WTC11 (cell line): ENCODE measurements at regions of chr14 and their contacts with region 1.

Region 1: GRCh38 chr14:37230551-37231194 is 32.9 kb downstream of the MIPOL1 start:
- DNase-seq: no peak
- ATAC-seq: no peak
- H3K4me3 Mint-ChIP-seq: no peak overlapping the region
- H3K27ac Mint-ChIP-seq: no peak overlapping the region
- H3K4me1 Mint-ChIP-seq: no peaks in the 10 kb centered on the region
- H3K27me3 Mint-ChIP-seq: peaks cover 8% of the 10 kb centered on the region; the same call in 1 of the 2 replicates
- CTCF ChIP-seq: peak; percentile 72

Region 2: DNA sequence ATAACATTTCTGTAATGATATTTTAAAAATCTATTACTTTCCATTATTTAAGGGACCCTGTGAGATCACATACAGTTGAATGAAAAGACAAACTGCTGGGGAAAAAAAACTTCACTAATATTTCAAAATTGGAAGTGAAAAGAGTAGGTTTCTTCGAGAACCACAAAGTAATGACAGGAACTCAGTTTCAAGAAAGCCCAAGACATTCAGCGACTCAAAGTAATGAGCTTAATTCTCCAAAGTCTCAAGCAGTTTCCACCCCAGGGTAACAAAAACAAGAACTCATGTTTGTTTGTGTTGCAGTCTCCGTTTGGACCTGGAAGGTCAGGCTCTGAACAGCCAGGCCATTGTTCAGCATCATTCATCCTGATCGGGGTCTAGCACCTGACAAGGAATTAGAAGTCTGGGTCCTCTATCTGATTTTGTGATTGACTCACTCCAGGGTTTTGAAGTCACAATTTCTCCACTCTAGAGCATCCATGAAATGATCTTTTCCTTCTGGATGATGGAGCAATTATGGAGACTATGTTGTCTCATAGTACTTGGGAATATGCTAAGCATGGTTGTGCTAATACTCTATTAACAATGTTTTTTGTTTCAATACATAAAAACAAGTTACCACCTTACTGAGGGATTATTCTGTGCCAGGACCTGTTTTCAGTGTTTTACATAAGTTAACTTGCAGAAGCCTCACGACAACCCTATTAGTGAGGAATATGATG is 185.2 kb before region 1 on chr14:
- CTCF ChIA-PET with region 1: no interaction called
- POLR2A ChIA-PET with region 1: no interaction called
- DNase-seq: no peak
- ATAC-seq: no peak
- H3K4me3 Mint-ChIP-seq: no peak overlapping the region
- H3K27ac Mint-ChIP-seq: no peak overlapping the region
- H3K4me1 Mint-ChIP-seq: no peaks in the 10 kb centered on the region
- H3K27me3 Mint-ChIP-seq: no peaks in the 10 kb centered on the region
- CTCF ChIP-seq: no peak

Region 3: DNA sequence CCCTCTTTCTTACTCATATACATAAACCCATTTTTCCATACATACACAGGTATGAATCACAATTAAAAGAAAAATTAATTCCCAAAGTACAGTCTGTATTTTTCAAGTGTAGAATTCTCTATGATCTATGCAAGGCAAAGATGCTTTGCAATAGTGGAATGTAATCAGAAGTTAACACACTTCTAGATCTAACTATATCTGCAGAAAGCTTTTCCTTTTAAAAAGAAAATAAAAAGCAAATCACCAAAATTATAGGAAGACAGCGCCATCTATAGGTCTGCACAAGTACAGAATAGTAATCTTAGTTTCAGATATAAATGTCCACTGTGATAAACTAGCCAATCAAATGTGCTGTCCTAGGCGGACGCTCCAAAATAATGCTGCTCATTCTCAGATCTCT is 80.3 kb before region 1 on chr14:
- CTCF ChIA-PET with region 1: interaction called, 15 read pairs
- POLR2A ChIA-PET with region 1: no interaction called
- DNase-seq: no peak
- ATAC-seq: peak; percentile 68
- H3K4me3 Mint-ChIP-seq: no peak overlapping the region
- H3K27ac Mint-ChIP-seq: no peak overlapping the region
- H3K4me1 Mint-ChIP-seq: no peaks in the 10 kb centered on the region
- H3K27me3 Mint-ChIP-seq: no peaks in the 10 kb centered on the region
- CTCF ChIP-seq: peak; percentile 63

Region 4: DNA sequence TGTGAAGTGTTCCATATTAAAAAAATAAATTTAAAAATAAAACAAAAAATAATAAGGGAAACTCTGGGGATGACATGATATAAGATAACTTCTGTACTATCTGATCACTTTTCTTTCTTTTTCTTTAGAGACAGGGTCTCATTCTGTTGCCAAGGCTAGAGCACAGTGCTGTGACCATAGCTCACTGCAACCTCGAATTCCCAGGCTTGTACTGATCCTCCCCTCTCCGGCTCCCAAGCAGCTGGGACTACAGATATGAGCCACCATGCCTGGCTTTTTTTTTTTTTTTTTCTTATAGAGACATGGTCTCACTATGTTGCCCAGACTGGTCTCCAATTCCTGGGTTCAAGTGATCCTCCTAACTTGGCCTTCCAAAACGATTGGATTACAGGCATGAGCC is 43.4 kb before region 1 on chr14:
- CTCF ChIA-PET with region 1: interaction called, 11 read pairs
- POLR2A ChIA-PET with region 1: no interaction called
- DNase-seq: no peak
- ATAC-seq: no peak
- H3K4me3 Mint-ChIP-seq: no peak overlapping the region
- H3K27ac Mint-ChIP-seq: no peak overlapping the region
- H3K4me1 Mint-ChIP-seq: no peaks in the 10 kb centered on the region
- H3K27me3 Mint-ChIP-seq: peaks cover 20% of the 10 kb centered on the region
- CTCF ChIP-seq: no peak

Region 5: GRCh38 chr14:37197421-37198272 is 33.0 kb before region 1 on chr14 and contains the start of gene MIPOL1:
- CTCF ChIA-PET with region 1: interaction called, 16 read pairs
- POLR2A ChIA-PET with region 1: no interaction called
- DNase-seq: peak; percentile 60
- ATAC-seq: peak; percentile 87
- H3K4me3 Mint-ChIP-seq: peak within 1 kb of the TSS; percentile 79
- H3K27ac Mint-ChIP-seq: peak within 1 kb of the TSS; percentile 55
- H3K4me1 Mint-ChIP-seq: peaks cover 25% of the 10 kb centered on the region
- H3K27me3 Mint-ChIP-seq: peaks cover 22% of the 10 kb centered on the region
- CTCF ChIP-seq: no peak
- total RNA-seq, gene MIPOL1: 12.0 to 13.1 TPM (median 12.3 TPM) in 3 replicates

Region 6: GRCh38 chr14:37241198-37241597 is 10.5 kb after region 1 on chr14:
- CTCF ChIA-PET with region 1: interaction called, 17 read pairs
- POLR2A ChIA-PET with region 1: no interaction called
- DNase-seq: no peak
- ATAC-seq: peak; percentile 44
- H3K4me3 Mint-ChIP-seq: no peak overlapping the region
- H3K27ac Mint-ChIP-seq: no peak overlapping the region
- H3K4me1 Mint-ChIP-seq: peaks cover 10% of the 10 kb centered on the region
- H3K27me3 Mint-ChIP-seq: no peaks in the 10 kb centered on the region
- CTCF ChIP-seq: no peak

Region 7: GRCh38 chr14:37594238-37594914 is 363.7 kb after region 1 on chr14:
- CTCF ChIA-PET with region 1: interaction called, 14 read pairs
- POLR2A ChIA-PET with region 1: no interaction called
- DNase-seq: peak; percentile 77
- ATAC-seq: peak; percentile 2
- H3K4me3 Mint-ChIP-seq: peak overlapping the region; percentile 80
- H3K27ac Mint-ChIP-seq: no peak overlapping the region
- H3K4me1 Mint-ChIP-seq: peaks cover 56% of the 10 kb centered on the region
- H3K27me3 Mint-ChIP-seq: peaks cover 95% of the 10 kb centered on the region
- CTCF ChIP-seq: peak; percentile 83